B cell (primary cell): ENCODE measurements at regions of chr1 and their contacts with region 1.

Region 1: GRCh38 chr1:234772345-234773147 is 162.6 kb upstream of the IRF2BP2 start:
- DNase-seq: peak; percentile 83
- ATAC-seq: peak; percentile 83
- H3K4me3 ChIP-seq: peak overlapping the region; percentile 2 to 49 (median 33)
- H3K4me3 Mint-ChIP-seq: peak overlapping the region; percentile 82
- H3K27ac ChIP-seq: peak overlapping the region; percentile 90 to 91
- H3K27ac Mint-ChIP-seq: peak overlapping the region; percentile 95
- H3K4me1 ChIP-seq: peaks cover 29 to 39% of the 10 kb centered on the region in 2 donors
- H3K4me1 Mint-ChIP-seq: peaks cover 49% of the 10 kb centered on the region
- H3K27me3 ChIP-seq: peaks cover 0 to 9% (median 5%) of the 10 kb centered on the region in 4 experiments
- H3K27me3 Mint-ChIP-seq: no peaks in the 10 kb centered on the region
- CTCF ChIP-seq: no peak

Region 2: GRCh38 chr1:234676103-234676594 is 96.4 kb before region 1 on chr1:
- CTCF ChIA-PET with region 1: no interaction called
- POLR2A ChIA-PET with region 1: no interaction called
- intact Hi-C with region 1: loop called (anchors 5 kb)
- DNase-seq: peak; percentile 68
- ATAC-seq: peak; percentile 89
- H3K4me3 ChIP-seq: peak overlapping the region; percentile 49 to 80 (median 64)
- H3K4me3 Mint-ChIP-seq: peak overlapping the region; percentile 94
- H3K27ac ChIP-seq: no peak overlapping the region
- H3K27ac Mint-ChIP-seq: peak overlapping the region; percentile 76
- H3K4me1 ChIP-seq: peaks cover 7 to 8% of the 10 kb centered on the region in 2 donors
- H3K4me1 Mint-ChIP-seq: peaks cover 16% of the 10 kb centered on the region
- H3K27me3 ChIP-seq: no peaks in the 10 kb centered on the region
- H3K27me3 Mint-ChIP-seq: no peaks in the 10 kb centered on the region
- CTCF ChIP-seq: no peak

Region 3: DNA sequence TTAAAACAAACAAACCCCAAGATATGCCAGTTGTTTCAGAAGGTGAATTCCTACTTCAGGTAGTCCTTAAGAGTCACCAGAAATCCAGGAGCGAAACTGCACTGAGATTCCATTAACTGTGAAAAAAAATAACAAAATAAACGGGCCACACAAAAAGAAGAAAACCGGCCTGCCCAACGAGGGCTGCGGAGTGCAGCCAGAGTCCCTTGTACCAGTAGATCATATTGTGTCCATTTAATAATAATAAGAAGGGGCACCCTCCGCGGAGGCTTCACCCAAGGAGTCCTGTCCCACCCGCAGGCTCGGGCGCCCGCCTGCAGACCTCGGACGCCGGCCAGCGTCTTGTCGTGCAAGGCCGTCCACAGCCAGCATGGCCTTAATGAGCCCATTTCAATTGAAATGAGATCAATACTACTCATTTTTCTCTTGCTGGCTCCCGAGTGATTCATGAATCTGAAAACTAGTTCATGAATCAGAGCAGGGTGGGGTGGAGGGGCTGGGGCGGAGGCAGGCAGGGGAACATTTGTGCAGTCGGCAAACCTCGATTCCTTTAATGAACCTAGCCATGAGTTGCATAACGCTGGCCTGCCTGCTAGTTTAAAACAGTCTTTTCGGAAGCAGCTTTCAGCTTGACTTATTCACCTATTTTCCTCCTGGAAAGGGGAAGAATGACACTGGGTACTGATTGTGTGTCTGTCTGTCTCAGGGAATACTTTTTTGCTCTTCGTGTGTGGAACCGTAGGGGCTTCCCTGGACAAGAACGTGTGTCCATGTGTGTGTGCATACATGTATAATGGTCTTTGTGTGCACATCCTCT is 49.4 kb before region 1 on chr1:
- CTCF ChIA-PET with region 1: interaction called, 4 read pairs
- POLR2A ChIA-PET with region 1: interaction called, 8 read pairs
- intact Hi-C with region 1: loop called (anchors 1 kb)
- DNase-seq: peak; percentile 62
- ATAC-seq: no peak
- H3K4me3 ChIP-seq: no peak overlapping the region
- H3K4me3 Mint-ChIP-seq: peak overlapping the region; percentile 70
- H3K27ac ChIP-seq: peak overlapping the region in 1 of 2 donors; percentile 17
- H3K27ac Mint-ChIP-seq: peak overlapping the region; percentile 70
- H3K4me1 ChIP-seq: peaks cover 35 to 50% of the 10 kb centered on the region in 2 donors
- H3K4me1 Mint-ChIP-seq: peaks cover 47% of the 10 kb centered on the region
- H3K27me3 ChIP-seq: no peaks in the 10 kb centered on the region
- H3K27me3 Mint-ChIP-seq: no peaks in the 10 kb centered on the region
- CTCF ChIP-seq: no peak

Region 4: GRCh38 chr1:234730770-234731568 is 41.6 kb before region 1 on chr1:
- CTCF ChIA-PET with region 1: interaction called, 3 read pairs
- POLR2A ChIA-PET with region 1: no interaction called
- intact Hi-C with region 1: loop called (anchors 1 kb)
- DNase-seq: peak; percentile 72
- ATAC-seq: peak; percentile 80
- H3K4me3 ChIP-seq: no peak overlapping the region
- H3K4me3 Mint-ChIP-seq: peak overlapping the region; percentile 55
- H3K27ac ChIP-seq: peak overlapping the region; percentile 16 to 50
- H3K27ac Mint-ChIP-seq: peak overlapping the region; percentile 80
- H3K4me1 ChIP-seq: peaks cover 34 to 44% of the 10 kb centered on the region in 2 donors
- H3K4me1 Mint-ChIP-seq: peaks cover 44% of the 10 kb centered on the region
- H3K27me3 ChIP-seq: no peaks in the 10 kb centered on the region
- H3K27me3 Mint-ChIP-seq: no peaks in the 10 kb centered on the region
- CTCF ChIP-seq: peak; percentile 21

Region 5: GRCh38 chr1:234842726-234843641 is 70.4 kb after region 1 on chr1:
- CTCF ChIA-PET with region 1: no interaction called
- POLR2A ChIA-PET with region 1: no interaction called
- intact Hi-C with region 1: loop called (anchors 2 kb)
- DNase-seq: peak; percentile 49
- ATAC-seq: peak; percentile 65
- H3K4me3 ChIP-seq: no peak overlapping the region
- H3K4me3 Mint-ChIP-seq: peak overlapping the region; percentile 50
- H3K27ac ChIP-seq: no peak overlapping the region
- H3K27ac Mint-ChIP-seq: peak overlapping the region; percentile 11
- H3K4me1 ChIP-seq: peaks cover 25 to 33% of the 10 kb centered on the region in 2 donors
- H3K4me1 Mint-ChIP-seq: peaks cover 40% of the 10 kb centered on the region
- H3K27me3 ChIP-seq: no peaks in the 10 kb centered on the region
- H3K27me3 Mint-ChIP-seq: no peaks in the 10 kb centered on the region
- CTCF ChIP-seq: no peak